CD4-positive, alpha-beta memory T cell (primary cell): ENCODE measurements at regions of chr2 and their contacts with region 1.

Region 1: DNA sequence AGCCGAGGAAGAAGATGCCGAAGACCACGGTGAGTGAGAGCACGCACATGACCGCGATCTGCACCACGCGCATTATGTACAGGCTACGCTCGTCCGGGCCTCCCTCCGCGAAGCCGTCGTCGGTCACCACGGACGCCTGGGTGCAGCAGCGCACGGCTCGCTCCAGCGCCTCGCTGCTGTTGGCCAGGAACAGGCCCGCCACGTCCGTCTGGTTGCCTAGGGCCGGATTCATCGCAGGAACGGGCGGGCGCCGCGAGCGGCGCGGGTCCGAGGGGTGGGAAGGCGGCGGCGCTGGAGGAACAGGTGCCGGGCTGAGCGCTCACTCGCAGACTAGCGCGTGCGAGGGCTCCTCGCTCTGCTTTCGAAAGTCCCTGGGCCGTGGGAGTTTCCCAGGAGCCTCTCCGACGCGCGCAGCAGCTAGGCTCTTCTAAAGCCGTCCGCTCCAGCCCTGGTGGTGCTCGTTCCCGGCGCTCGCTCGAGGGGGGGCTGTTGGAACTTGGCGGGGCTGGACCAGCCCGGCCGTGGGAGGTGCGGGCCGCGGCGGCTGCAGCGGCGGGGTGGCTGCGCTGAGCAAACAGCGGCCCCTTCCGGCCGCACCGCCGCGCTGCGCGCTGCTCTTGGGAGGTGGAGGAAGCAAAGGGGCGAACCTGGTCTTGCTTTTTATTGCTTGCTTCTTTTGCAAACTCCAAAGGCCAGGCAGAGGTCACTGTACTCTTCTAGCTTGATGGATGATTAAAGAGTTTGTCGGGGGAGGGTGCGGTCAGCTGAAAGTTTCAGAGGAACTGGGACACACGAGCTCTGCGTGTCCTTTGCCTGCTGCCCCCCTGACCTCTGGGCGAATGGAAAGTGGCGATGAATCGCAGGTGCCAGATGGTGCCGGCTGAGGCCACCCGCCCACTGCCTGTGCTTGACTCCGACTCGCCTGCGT is at the start of gene RPRM:
- DNase-seq: peak; percentile 42 to 59 (median 53)
- H3K4me3 ChIP-seq: peak within 1 kb of the TSS in 1 of 2 donors; percentile 42
- H3K4me3 Mint-ChIP-seq: peak within 1 kb of the TSS; percentile 65 to 88 (median 78)
- H3K27ac ChIP-seq: no peak within 1 kb of the TSS
- H3K27ac Mint-ChIP-seq: peak within 1 kb of the TSS in 1 of 7 donors; percentile 75
- H3K4me1 ChIP-seq: peaks cover 23% of the 10 kb centered on the region
- H3K4me1 Mint-ChIP-seq: peaks cover 10 to 31% (median 17%) of the 10 kb centered on the region in 4 donors
- H3K27me3 ChIP-seq: peaks cover 24% of the 10 kb centered on the region
- H3K27me3 Mint-ChIP-seq: peaks cover 38 to 43% of the 10 kb centered on the region in 2 donors
- total RNA-seq, gene RPRM: not detected

Region 2: DNA sequence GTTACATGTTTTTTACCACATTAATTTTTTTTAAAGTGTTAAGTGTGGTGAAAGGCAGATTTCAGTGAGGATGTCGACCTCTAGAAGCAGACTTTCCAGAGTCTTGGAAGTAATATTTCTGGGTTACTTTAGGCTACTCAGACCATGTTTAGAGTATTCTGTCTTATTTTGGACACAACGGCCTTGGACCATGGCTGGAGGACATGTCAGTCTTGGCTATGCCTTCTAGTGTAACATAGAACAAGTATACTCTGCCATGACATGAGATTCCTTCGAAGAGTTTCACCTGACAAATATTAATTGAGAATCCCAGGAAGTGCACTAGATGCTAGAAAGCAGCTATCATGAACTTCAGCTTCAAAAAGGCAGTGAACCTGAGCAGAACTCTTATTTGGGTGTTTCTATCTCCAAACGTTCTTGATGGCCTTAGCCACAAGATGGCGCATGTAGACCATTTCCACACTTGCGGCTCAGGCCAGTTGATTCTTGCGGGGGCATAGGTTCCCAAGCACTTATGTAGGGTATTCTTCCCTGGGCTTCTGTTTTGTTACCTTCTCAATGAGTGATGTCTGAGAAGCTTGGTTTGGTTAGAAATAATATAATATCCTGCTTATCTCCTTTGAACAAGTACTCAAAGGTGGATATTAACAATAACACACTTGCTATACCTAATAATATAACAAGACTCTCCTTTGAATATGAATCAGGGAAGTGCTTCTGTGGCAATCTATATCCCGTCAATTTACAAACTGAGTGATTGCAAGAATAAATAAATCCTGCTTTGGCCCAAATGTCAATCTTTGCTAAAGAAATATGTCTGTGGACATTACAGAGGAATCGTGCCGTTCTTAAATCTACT is 1441.8 kb before region 1 on chr2:
- CTCF ChIA-PET with region 1: no interaction called
- POLR2A ChIA-PET with region 1: no interaction called
- intact Hi-C with region 1: loop called (anchors 2 kb)
- DNase-seq: peak in 4 of 5 donors; percentile 34 to 39 (median 37)
- H3K4me3 ChIP-seq: no peak overlapping the region
- H3K4me3 Mint-ChIP-seq: no peak overlapping the region
- H3K27ac ChIP-seq: no peak overlapping the region
- H3K27ac Mint-ChIP-seq: no peak overlapping the region
- H3K4me1 ChIP-seq: no peaks in the 10 kb centered on the region
- H3K4me1 Mint-ChIP-seq: no peaks in the 10 kb centered on the region
- H3K27me3 ChIP-seq: no peaks in the 10 kb centered on the region
- H3K27me3 Mint-ChIP-seq: peaks cover 0 to 2% of the 10 kb centered on the region in 2 donors

Region 3: GRCh38 chr2:152740743-152741328 is 737.8 kb before region 1 on chr2:
- CTCF ChIA-PET with region 1: no interaction called
- POLR2A ChIA-PET with region 1: no interaction called
- intact Hi-C with region 1: loop called (anchors 1 kb)
- DNase-seq: peak in 4 of 5 donors; percentile 43 to 52 (median 50)
- H3K4me3 ChIP-seq: no peak overlapping the region
- H3K4me3 Mint-ChIP-seq: no peak overlapping the region
- H3K27ac ChIP-seq: no peak overlapping the region
- H3K27ac Mint-ChIP-seq: no peak overlapping the region
- H3K4me1 ChIP-seq: no peaks in the 10 kb centered on the region
- H3K4me1 Mint-ChIP-seq: peaks cover 3 to 11% (median 6%) of the 10 kb centered on the region in 4 donors
- H3K27me3 ChIP-seq: no peaks in the 10 kb centered on the region
- H3K27me3 Mint-ChIP-seq: no peaks in the 10 kb centered on the region

Region 4: GRCh38 chr2:152925547-152926327 is 552.9 kb before region 1 on chr2:
- CTCF ChIA-PET with region 1: no interaction called
- POLR2A ChIA-PET with region 1: no interaction called
- intact Hi-C with region 1: loop called (anchors 2 kb)
- DNase-seq: peak in 2 of 5 donors; percentile 3 to 6
- H3K4me3 ChIP-seq: no peak overlapping the region
- H3K4me3 Mint-ChIP-seq: no peak overlapping the region
- H3K27ac ChIP-seq: no peak overlapping the region
- H3K27ac Mint-ChIP-seq: no peak overlapping the region
- H3K4me1 ChIP-seq: no peaks in the 10 kb centered on the region
- H3K4me1 Mint-ChIP-seq: no peaks in the 10 kb centered on the region
- H3K27me3 ChIP-seq: no peaks in the 10 kb centered on the region
- H3K27me3 Mint-ChIP-seq: peaks cover 2 to 6% of the 10 kb centered on the region in 2 donors

Region 5: GRCh38 chr2:153163058-153163457 is 315.5 kb before region 1 on chr2:
- CTCF ChIA-PET with region 1: no interaction called
- POLR2A ChIA-PET with region 1: no interaction called
- intact Hi-C with region 1: loop called (anchors 2 kb)
- DNase-seq: peak in 2 of 5 donors; percentile 1 to 3
- H3K4me3 ChIP-seq: no peak overlapping the region
- H3K4me3 Mint-ChIP-seq: no peak overlapping the region
- H3K27ac ChIP-seq: no peak overlapping the region
- H3K27ac Mint-ChIP-seq: no peak overlapping the region
- H3K4me1 ChIP-seq: no peaks in the 10 kb centered on the region
- H3K4me1 Mint-ChIP-seq: no peaks in the 10 kb centered on the region
- H3K27me3 ChIP-seq: no peaks in the 10 kb centered on the region
- H3K27me3 Mint-ChIP-seq: no peaks in the 10 kb centered on the region